GM12878 (cell line): ENCODE measurements at regions of chr3 and their contacts with region 1.

Region 1: DNA sequence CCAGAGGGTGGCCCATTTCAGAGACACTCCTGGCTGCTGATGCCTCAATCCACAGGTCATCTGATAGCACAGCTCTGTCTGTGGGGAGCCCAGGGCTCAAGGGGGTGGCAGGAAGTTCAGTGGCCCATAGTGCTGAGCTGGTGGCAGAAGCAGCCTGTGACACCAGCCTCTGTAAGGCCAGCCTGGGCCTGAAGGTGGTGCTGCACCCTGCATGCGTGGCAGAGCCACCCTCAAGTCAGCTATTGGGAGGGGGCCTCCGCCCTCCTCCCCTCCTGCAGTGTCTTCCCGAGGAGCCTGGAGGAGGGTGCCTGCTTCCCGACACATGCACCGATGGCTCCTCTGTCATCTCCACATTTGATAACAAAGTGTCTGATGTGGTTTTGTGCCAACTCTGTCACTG is 3.0 kb downstream of the PLA1A start:
- DNase-seq: peak; percentile 85
- ATAC-seq: peak; percentile 81
- H3K4me3 ChIP-seq: no peak overlapping the region
- H3K27ac ChIP-seq: peak overlapping the region; percentile 87
- H3K4me1 ChIP-seq: peaks cover 62% of the 10 kb centered on the region
- H3K27me3 ChIP-seq: no peaks in the 10 kb centered on the region
- CTCF ChIP-seq: peak; percentile 88 to 96 (median 91); a peak in 5 of 6 replicates
- EP300 ChIP-seq: no peak
- POLR2A ChIP-seq: peak; percentile 66
- RAD21 ChIP-seq: peak; percentile 82

Region 2: DNA sequence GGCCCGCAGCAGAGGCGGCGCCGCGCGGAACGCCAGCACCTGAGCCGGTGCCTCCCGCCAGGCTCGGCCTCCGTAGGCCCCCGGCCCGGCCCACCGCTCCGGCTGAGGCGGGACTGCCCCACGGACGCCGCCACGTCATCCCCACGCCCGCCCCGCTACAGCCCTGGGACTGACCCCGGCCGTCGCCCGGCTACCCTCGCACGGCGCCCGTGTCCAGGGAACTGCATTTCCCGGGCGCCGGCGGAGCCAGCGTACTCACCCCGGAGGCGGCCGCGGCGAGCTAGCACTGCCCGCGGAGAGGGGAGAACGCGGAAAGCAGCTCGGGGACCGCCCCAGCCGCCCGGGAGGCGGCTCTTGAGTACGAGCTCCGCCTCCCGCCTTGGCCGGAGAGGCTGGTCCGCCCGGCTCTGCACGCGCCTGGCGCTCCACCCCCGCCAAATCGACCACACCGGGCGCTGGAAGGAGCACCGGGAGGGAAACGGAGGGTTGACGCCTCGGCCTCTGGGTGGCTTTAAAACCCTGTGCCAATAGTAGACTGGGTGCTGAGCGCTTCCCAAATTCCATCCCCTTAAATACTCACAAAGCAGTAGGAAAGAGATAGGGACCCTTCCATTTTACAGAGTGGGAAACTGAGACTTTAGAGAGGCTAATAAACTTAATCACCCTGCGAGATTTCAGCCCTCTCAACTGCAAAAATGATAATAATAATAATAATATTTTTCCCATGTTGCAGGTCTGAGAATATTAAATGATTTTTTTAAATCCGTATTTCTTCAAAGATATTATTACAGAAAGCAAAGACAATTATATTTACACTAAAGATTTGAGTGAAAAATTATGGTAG is 359.9 kb before region 1 on chr3 and contains the start of gene B4GALT4:
- CTCF ChIA-PET with region 1: interaction called, 11 read pairs
- POLR2A ChIA-PET with region 1: no interaction called
- RAD21 ChIA-PET with region 1: interaction called, 3 read pairs
- SMC1A ChIA-PET with region 1: no interaction called
- in situ Hi-C with region 1: no loop called
- intact Hi-C with region 1: no loop called
- DNase-seq: no peak
- ATAC-seq: peak; percentile 94
- H3K4me3 ChIP-seq: peak within 1 kb of the TSS; percentile 98
- H3K27ac ChIP-seq: peak within 1 kb of the TSS; percentile 88
- H3K4me1 ChIP-seq: peaks cover 4% of the 10 kb centered on the region; the same call in 1 of the 2 replicates
- H3K27me3 ChIP-seq: no peaks in the 10 kb centered on the region
- CTCF ChIP-seq: no peak
- EP300 ChIP-seq: no peak
- POLR2A ChIP-seq: peak; percentile 98
- RAD21 ChIP-seq: no peak
- polyA plus RNA-seq, gene B4GALT4: 13.8 to 15.4 TPM

Region 3: DNA sequence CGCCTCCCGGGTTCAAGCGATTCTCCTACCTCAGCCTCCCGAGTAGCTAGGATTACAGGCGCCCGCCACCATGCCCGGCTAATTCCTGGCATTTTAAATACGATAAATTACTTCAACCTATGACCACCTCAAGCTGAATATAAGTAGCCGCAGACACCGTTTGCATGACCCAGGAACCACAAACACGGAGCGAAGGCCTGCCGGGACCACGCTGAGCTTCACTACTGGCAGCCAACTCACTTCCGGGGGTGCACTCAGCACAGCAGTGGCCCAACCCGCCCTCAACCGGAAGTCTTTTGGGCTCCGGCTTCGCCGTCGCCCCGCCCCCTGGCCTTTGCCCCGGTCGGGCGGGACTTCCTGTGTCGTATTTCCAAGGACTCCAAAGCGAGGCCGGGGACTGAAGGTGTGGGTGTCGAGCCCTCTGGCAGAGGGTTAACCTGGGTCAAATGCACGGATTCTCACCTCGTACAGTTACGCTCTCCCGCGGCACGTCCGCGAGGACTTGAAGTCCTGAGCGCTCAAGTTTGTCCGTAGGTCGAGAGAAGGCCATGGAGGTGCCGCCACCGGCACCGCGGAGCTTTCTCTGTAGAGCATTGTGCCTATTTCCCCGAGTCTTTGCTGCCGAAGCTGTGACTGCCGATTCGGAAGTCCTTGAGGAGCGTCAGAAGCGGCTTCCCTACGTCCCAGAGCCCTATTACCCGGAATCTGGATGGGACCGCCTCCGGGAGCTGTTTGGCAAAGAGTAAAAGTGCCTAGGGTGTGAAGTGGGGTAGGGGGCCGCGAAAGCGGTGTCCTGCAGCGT is 102.3 kb before region 1 on chr3 and contains the start of gene TIMMDC1:
- CTCF ChIA-PET with region 1: interaction called, 10 read pairs
- POLR2A ChIA-PET with region 1: interaction called, 13 read pairs
- RAD21 ChIA-PET with region 1: interaction called, 9 read pairs
- SMC1A ChIA-PET with region 1: interaction called, 20 read pairs
- in situ Hi-C with region 1: no loop called
- intact Hi-C with region 1: no loop called
- DNase-seq: peak; percentile 83
- ATAC-seq: peak; percentile 96
- H3K4me3 ChIP-seq: peak within 1 kb of the TSS; percentile 75
- H3K27ac ChIP-seq: peak within 1 kb of the TSS; percentile 94
- H3K4me1 ChIP-seq: no peaks in the 10 kb centered on the region
- H3K27me3 ChIP-seq: no peaks in the 10 kb centered on the region
- CTCF ChIP-seq: no peak
- EP300 ChIP-seq: peak in 1 of 2 experiments; percentile 27; a peak in 1 of 4 replicates
- POLR2A ChIP-seq: peak; percentile 96
- RAD21 ChIP-seq: no peak
- polyA plus RNA-seq, gene TIMMDC1: 136 to 146 TPM

Region 4: DNA sequence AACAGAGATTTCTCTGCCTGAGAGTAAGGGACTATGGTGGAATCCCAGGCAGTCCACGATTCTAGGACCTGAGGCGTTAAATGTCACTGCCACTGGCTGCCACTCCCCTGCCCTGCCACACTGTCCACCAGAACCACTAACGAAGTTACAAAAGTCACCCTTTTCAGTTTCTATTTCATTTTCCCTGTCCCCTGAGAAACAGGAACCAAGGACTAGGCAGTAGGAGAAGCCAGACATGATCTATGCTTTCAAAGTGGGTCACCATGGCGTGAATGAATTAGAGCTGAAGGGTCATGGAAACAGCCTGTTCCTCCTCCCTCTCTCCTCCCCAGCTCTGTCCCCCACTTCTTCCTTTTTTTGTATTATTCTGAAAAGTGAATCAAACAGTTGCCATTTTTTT is 30.5 kb before region 1 on chr3:
- CTCF ChIA-PET with region 1: interaction called, 12 read pairs
- POLR2A ChIA-PET with region 1: interaction called, 6 read pairs
- RAD21 ChIA-PET with region 1: interaction called, 4 read pairs
- SMC1A ChIA-PET with region 1: interaction called, 7 read pairs
- in situ Hi-C with region 1: no loop called
- intact Hi-C with region 1: no loop called
- DNase-seq: no peak
- ATAC-seq: peak; percentile 96
- H3K4me3 ChIP-seq: no peak overlapping the region
- H3K27ac ChIP-seq: peak overlapping the region; percentile 69
- H3K4me1 ChIP-seq: peaks cover 14% of the 10 kb centered on the region
- H3K27me3 ChIP-seq: no peaks in the 10 kb centered on the region
- CTCF ChIP-seq: no peak
- EP300 ChIP-seq: 0 out of 4 replicates have a peak, but pooled peaks of 1 of the 2 experiments have one; percentile 18
- POLR2A ChIP-seq: no peak
- RAD21 ChIP-seq: no peak

Region 5: DNA sequence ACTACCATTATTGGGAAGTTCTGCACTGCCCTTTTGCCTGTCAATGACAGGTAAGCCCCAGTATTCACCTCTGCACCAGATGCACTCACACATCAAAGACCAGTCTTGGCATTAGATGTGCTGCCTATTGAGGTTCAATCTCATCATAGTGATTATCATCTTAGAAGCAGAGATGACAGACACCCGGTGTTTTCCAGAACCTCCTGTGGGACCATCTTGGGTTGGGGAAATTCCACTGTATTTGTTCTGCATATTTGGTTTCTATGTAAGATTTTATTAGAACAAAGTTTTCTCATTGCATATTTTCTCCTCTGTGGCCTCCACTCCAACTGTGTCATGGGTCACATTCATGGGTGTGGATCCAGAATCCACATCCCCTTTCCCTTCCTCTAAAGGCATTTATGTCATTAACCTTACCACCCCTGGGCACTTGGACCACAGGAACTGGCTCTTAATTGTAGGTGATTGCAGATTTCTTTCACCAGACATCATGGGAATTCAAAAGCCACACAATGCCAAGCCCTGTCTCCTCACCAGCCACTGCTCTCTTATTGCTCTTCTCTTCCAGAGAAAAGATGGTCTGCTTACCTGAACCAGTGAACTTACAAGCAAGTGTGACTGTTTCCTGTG is 28.2 kb after region 1 on chr3:
- CTCF ChIA-PET with region 1: interaction called, 42 read pairs
- POLR2A ChIA-PET with region 1: interaction called, 103 read pairs
- RAD21 ChIA-PET with region 1: interaction called, 103 read pairs
- SMC1A ChIA-PET with region 1: interaction called, 128 read pairs
- in situ Hi-C with region 1: no loop called
- intact Hi-C with region 1: loop called (anchors 1 kb)
- DNase-seq: peak; percentile 64
- ATAC-seq: peak; percentile 71
- H3K4me3 ChIP-seq: peak overlapping the region; percentile 24; the same call in 1 of the 2 replicates
- H3K27ac ChIP-seq: peak overlapping the region; percentile 84
- H3K4me1 ChIP-seq: peaks cover 49% of the 10 kb centered on the region
- H3K27me3 ChIP-seq: no peaks in the 10 kb centered on the region
- CTCF ChIP-seq: no peak
- EP300 ChIP-seq: peak in 1 of 2 experiments; percentile 18; a peak in 1 of 4 replicates
- POLR2A ChIP-seq: no peak
- RAD21 ChIP-seq: no peak

Region 6: GRCh38 chr3:119690043-119690656 is 89.4 kb after region 1 on chr3:
- CTCF ChIA-PET with region 1: interaction called, 296 read pairs
- POLR2A ChIA-PET with region 1: interaction called, 3 read pairs
- RAD21 ChIA-PET with region 1: interaction called, 158 read pairs
- SMC1A ChIA-PET with region 1: interaction called, 3 read pairs
- in situ Hi-C with region 1: no loop called
- intact Hi-C with region 1: no loop called
- DNase-seq: no peak
- ATAC-seq: peak; percentile 62
- H3K4me3 ChIP-seq: no peak overlapping the region
- H3K27ac ChIP-seq: no peak overlapping the region
- H3K4me1 ChIP-seq: no peaks in the 10 kb centered on the region
- H3K27me3 ChIP-seq: no peaks in the 10 kb centered on the region
- CTCF ChIP-seq: peak; percentile 21 to 53 (median 23); a peak in 4 of 6 replicates
- EP300 ChIP-seq: no peak
- POLR2A ChIP-seq: no peak
- RAD21 ChIP-seq: no peak

Region 7: GRCh38 chr3:119783883-119784282 is 183.2 kb after region 1 on chr3:
- CTCF ChIA-PET with region 1: no interaction called
- POLR2A ChIA-PET with region 1: no interaction called
- RAD21 ChIA-PET with region 1: no interaction called
- SMC1A ChIA-PET with region 1: no interaction called
- in situ Hi-C with region 1: no loop called
- intact Hi-C with region 1: no loop called
- DNase-seq: no peak
- ATAC-seq: no peak
- H3K4me3 ChIP-seq: no peak overlapping the region
- H3K27ac ChIP-seq: no peak overlapping the region
- H3K4me1 ChIP-seq: peaks cover 15% of the 10 kb centered on the region; the same call in 1 of the 2 replicates
- H3K27me3 ChIP-seq: no peaks in the 10 kb centered on the region
- CTCF ChIP-seq: no peak
- EP300 ChIP-seq: no peak
- POLR2A ChIP-seq: no peak
- RAD21 ChIP-seq: no peak

Region 8: DNA sequence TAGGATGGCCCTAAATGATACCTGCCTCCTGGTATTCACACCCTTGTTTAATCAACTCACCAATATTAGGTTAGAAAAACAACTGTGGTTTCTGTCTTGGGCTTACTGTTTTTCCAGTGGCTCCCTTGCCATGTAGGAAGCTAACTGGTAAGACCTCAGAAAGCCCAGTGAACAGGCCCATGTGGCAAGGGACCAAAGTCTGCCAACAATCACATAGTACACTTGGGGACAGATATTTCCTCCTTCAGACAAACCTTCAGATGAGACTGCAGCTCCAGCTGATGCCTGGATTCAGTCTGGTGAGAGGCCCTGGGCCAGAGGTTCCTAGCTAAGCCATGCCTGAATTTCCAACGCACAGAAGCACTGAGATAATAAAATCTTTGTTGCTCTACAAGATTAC is 397.4 kb after region 1 on chr3:
- CTCF ChIA-PET with region 1: no interaction called
- POLR2A ChIA-PET with region 1: no interaction called
- RAD21 ChIA-PET with region 1: no interaction called
- SMC1A ChIA-PET with region 1: no interaction called
- in situ Hi-C with region 1: no loop called
- intact Hi-C with region 1: no loop called
- DNase-seq: no peak
- ATAC-seq: no peak
- H3K4me3 ChIP-seq: no peak overlapping the region
- H3K27ac ChIP-seq: no peak overlapping the region
- H3K4me1 ChIP-seq: no peaks in the 10 kb centered on the region
- H3K27me3 ChIP-seq: no peaks in the 10 kb centered on the region
- CTCF ChIP-seq: no peak
- EP300 ChIP-seq: no peak
- POLR2A ChIP-seq: no peak
- RAD21 ChIP-seq: no peak